ENCODE measurements at regions of chr10 and their contacts with region 1.

Region 1: DNA sequence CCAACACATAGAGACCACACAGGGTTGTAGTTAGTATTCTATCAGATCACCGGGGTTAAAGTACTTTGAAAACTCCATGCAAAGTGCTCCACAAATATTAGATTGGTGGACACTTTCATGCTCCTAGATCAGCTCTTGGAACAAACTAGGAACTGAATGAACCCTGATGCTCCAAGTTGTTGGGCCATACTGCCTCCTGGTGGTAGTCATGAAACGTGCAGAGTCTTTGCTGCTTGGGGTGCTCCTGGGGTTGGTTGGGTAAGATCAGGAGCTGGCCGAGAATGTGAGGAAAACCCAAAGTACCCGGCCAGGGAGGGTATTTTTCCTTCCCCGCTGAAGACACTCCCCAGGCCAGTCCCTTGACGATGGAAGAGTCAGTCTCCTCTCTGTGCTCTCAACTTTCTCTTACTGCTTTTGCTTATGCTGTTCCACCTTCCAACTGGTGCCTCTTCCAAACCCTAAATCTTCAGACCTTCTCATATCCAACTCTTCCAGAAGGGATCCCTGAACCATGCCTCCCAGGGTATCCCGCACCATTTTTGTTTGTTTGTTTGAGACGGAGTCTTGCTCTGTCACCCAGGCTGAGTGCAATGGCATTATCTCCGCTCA is 920 bp upstream of the RPEL1 start:
- DNase-seq: peak; percentile 81
- H3K4me3 ChIP-seq: no peak overlapping the region
- H3K27ac ChIP-seq: no peak overlapping the region
- H3K4me1 ChIP-seq: peaks cover 8% of the 10 kb centered on the region
- H3K27me3 ChIP-seq: peaks cover 0 to 1% of the 10 kb centered on the region in 2 experiments
- CTCF ChIP-seq: peak; percentile 86 to 93
- POLR2A ChIP-seq: no peak

Region 2: GRCh38 chr10:102835007-102835482 is 409.7 kb before region 1 on chr10:
- CTCF ChIA-PET with region 1: interaction called, 24 read pairs
- POLR2A ChIA-PET with region 1: no interaction called
- dilution Hi-C with region 1: no loop called
- intact Hi-C with region 1: loop called (anchors 1 kb)
- DNase-seq: peak; percentile 80
- H3K4me3 ChIP-seq: no peak overlapping the region
- H3K27ac ChIP-seq: no peak overlapping the region
- H3K4me1 ChIP-seq: no peaks in the 10 kb centered on the region
- H3K27me3 ChIP-seq: peaks cover 0 to 4% of the 10 kb centered on the region in 2 experiments
- CTCF ChIP-seq: peak; percentile 82 to 85
- POLR2A ChIP-seq: no peak

Region 3: GRCh38 chr10:103053659-103054581 is 190.8 kb before region 1 on chr10:
- CTCF ChIA-PET with region 1: interaction called, 11 read pairs
- POLR2A ChIA-PET with region 1: no interaction called
- dilution Hi-C with region 1: no loop called
- intact Hi-C with region 1: no loop called
- DNase-seq: peak; percentile 57
- H3K4me3 ChIP-seq: no peak overlapping the region
- H3K27ac ChIP-seq: no peak overlapping the region
- H3K4me1 ChIP-seq: no peaks in the 10 kb centered on the region
- H3K27me3 ChIP-seq: no peaks in the 10 kb centered on the region
- CTCF ChIP-seq: peak in 1 of 2 donors; percentile 55
- POLR2A ChIP-seq: no peak

Region 4: GRCh38 chr10:103096153-103096552 is 148.6 kb before region 1 on chr10:
- CTCF ChIA-PET with region 1: interaction called, 87 read pairs
- POLR2A ChIA-PET with region 1: no interaction called
- dilution Hi-C with region 1: no loop called
- intact Hi-C with region 1: no loop called
- DNase-seq: no peak
- H3K4me3 ChIP-seq: no peak overlapping the region
- H3K27ac ChIP-seq: no peak overlapping the region
- H3K4me1 ChIP-seq: no peaks in the 10 kb centered on the region
- H3K27me3 ChIP-seq: no peaks in the 10 kb centered on the region
- CTCF ChIP-seq: no peak
- POLR2A ChIP-seq: no peak

Region 5: GRCh38 chr10:103125323-103126267 is 119.2 kb before region 1 on chr10:
- CTCF ChIA-PET with region 1: interaction called, 40 read pairs
- POLR2A ChIA-PET with region 1: no interaction called
- dilution Hi-C with region 1: no loop called
- intact Hi-C with region 1: no loop called
- DNase-seq: peak; percentile 11
- H3K4me3 ChIP-seq: no peak overlapping the region
- H3K27ac ChIP-seq: no peak overlapping the region
- H3K4me1 ChIP-seq: no peaks in the 10 kb centered on the region
- H3K27me3 ChIP-seq: no peaks in the 10 kb centered on the region
- CTCF ChIP-seq: no peak
- POLR2A ChIP-seq: no peak

Region 6: GRCh38 chr10:103181244-103181643 is 63.5 kb before region 1 on chr10:
- CTCF ChIA-PET with region 1: interaction called, 35 read pairs
- POLR2A ChIA-PET with region 1: interaction called, 5 read pairs
- dilution Hi-C with region 1: no loop called
- intact Hi-C with region 1: loop called (anchors 2 kb)
- DNase-seq: peak; percentile 91
- H3K4me3 ChIP-seq: no peak overlapping the region
- H3K27ac ChIP-seq: peak overlapping the region; percentile 51
- H3K4me1 ChIP-seq: peaks cover 25% of the 10 kb centered on the region
- H3K27me3 ChIP-seq: no peaks in the 10 kb centered on the region
- CTCF ChIP-seq: no peak
- POLR2A ChIP-seq: no peak

Region 7: GRCh38 chr10:103481974-103482531 is 237.3 kb after region 1 on chr10:
- CTCF ChIA-PET with region 1: no interaction called
- POLR2A ChIA-PET with region 1: no interaction called
- dilution Hi-C with region 1: no loop called
- intact Hi-C with region 1: loop called (anchors 5 kb)
- DNase-seq: peak; percentile 72
- H3K4me3 ChIP-seq: no peak overlapping the region
- H3K27ac ChIP-seq: no peak overlapping the region
- H3K4me1 ChIP-seq: no peaks in the 10 kb centered on the region
- H3K27me3 ChIP-seq: no peaks in the 10 kb centered on the region
- CTCF ChIP-seq: peak; percentile 49 to 69
- POLR2A ChIP-seq: no peak